CD8-positive, alpha-beta T cell (primary cell): ENCODE measurements at regions of chr9 and their contacts with region 1.

Region 1: GRCh38 chr9:5786370-5787127 is 46.4 kb downstream of the ERMP1 start:
- DNase-seq: no peak
- ATAC-seq: no peak
- H3K4me3 ChIP-seq: no peak overlapping the region
- H3K4me3 Mint-ChIP-seq: no peak overlapping the region
- H3K27ac ChIP-seq: no peak overlapping the region
- H3K27ac Mint-ChIP-seq: peak overlapping the region; percentile 53
- H3K4me1 ChIP-seq: no peaks in the 10 kb centered on the region
- H3K4me1 Mint-ChIP-seq: peaks cover 22% of the 10 kb centered on the region
- H3K27me3 ChIP-seq: no peaks in the 10 kb centered on the region
- H3K27me3 Mint-ChIP-seq: no peaks in the 10 kb centered on the region
- CTCF ChIP-seq: no peak

Region 2: GRCh38 chr9:5773324-5773999 is 13.1 kb before region 1 on chr9:
- CTCF ChIA-PET with region 1: no interaction called
- POLR2A ChIA-PET with region 1: no interaction called
- intact Hi-C with region 1: loop called in 1 of 2 experiments (anchors 2 kb)
- DNase-seq: no peak
- ATAC-seq: no peak
- H3K4me3 ChIP-seq: no peak overlapping the region
- H3K4me3 Mint-ChIP-seq: no peak overlapping the region
- H3K27ac ChIP-seq: no peak overlapping the region
- H3K27ac Mint-ChIP-seq: peak overlapping the region; percentile 24
- H3K4me1 ChIP-seq: no peaks in the 10 kb centered on the region
- H3K4me1 Mint-ChIP-seq: peaks cover 2% of the 10 kb centered on the region
- H3K27me3 ChIP-seq: no peaks in the 10 kb centered on the region
- H3K27me3 Mint-ChIP-seq: no peaks in the 10 kb centered on the region
- CTCF ChIP-seq: no peak

Region 3: DNA sequence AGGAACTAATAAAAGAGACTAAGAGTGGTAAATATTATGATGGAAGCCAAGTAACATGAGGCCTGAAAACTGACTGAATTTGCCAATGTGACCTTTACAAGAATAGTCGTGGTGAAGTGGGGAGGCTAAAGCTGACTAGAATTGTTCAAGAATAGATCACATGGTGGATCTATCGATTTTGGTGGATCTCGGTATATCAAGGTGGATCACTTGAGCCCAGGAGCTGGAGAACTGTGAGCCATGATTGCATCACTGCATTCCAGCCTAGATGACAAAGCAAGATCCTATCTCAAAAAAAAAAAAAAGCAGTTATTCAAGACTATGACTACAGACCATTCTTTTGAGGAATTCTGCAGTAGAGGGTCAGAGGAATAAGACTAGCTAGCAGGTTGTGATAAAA is 31.3 kb after region 1 on chr9:
- CTCF ChIA-PET with region 1: no interaction called
- POLR2A ChIA-PET with region 1: no interaction called
- intact Hi-C with region 1: no loop called
- DNase-seq: no peak
- ATAC-seq: no peak
- H3K4me3 ChIP-seq: no peak overlapping the region
- H3K4me3 Mint-ChIP-seq: no peak overlapping the region
- H3K27ac ChIP-seq: no peak overlapping the region
- H3K27ac Mint-ChIP-seq: no peak overlapping the region
- H3K4me1 ChIP-seq: no peaks in the 10 kb centered on the region
- H3K4me1 Mint-ChIP-seq: peaks cover 14% of the 10 kb centered on the region
- H3K27me3 ChIP-seq: no peaks in the 10 kb centered on the region
- H3K27me3 Mint-ChIP-seq: no peaks in the 10 kb centered on the region
- CTCF ChIP-seq: no peak

Region 4: GRCh38 chr9:5843794-5844504 is 57.4 kb after region 1 on chr9:
- CTCF ChIA-PET with region 1: no interaction called
- POLR2A ChIA-PET with region 1: no interaction called
- intact Hi-C with region 1: no loop called
- DNase-seq: peak in 1 of 9 experiments; percentile 35
- ATAC-seq: no peak
- H3K4me3 ChIP-seq: peak overlapping the region in 1 of 2 experiments; percentile 24
- H3K4me3 Mint-ChIP-seq: peak overlapping the region; percentile 65
- H3K27ac ChIP-seq: peak overlapping the region in 1 of 2 experiments; percentile 61
- H3K27ac Mint-ChIP-seq: peak overlapping the region; percentile 84
- H3K4me1 ChIP-seq: peaks cover 53% of the 10 kb centered on the region
- H3K4me1 Mint-ChIP-seq: peaks cover 63% of the 10 kb centered on the region
- H3K27me3 ChIP-seq: no peaks in the 10 kb centered on the region
- H3K27me3 Mint-ChIP-seq: no peaks in the 10 kb centered on the region
- CTCF ChIP-seq: no peak

Region 5: GRCh38 chr9:5869315-5870019 is 82.9 kb after region 1 on chr9:
- CTCF ChIA-PET with region 1: no interaction called
- POLR2A ChIA-PET with region 1: no interaction called
- intact Hi-C with region 1: no loop called
- DNase-seq: peak in 2 of 9 experiments; percentile 23 to 30
- ATAC-seq: no peak
- H3K4me3 ChIP-seq: no peak overlapping the region
- H3K4me3 Mint-ChIP-seq: no peak overlapping the region
- H3K27ac ChIP-seq: no peak overlapping the region
- H3K27ac Mint-ChIP-seq: no peak overlapping the region
- H3K4me1 ChIP-seq: no peaks in the 10 kb centered on the region
- H3K4me1 Mint-ChIP-seq: peaks cover 13% of the 10 kb centered on the region
- H3K27me3 ChIP-seq: no peaks in the 10 kb centered on the region
- H3K27me3 Mint-ChIP-seq: no peaks in the 10 kb centered on the region
- CTCF ChIP-seq: no peak